Colonic mucosa (tissue), 4 donors: ENCODE measurements at regions of chr12 and their contacts with region 1.

Region 1: GRCh38 chr12:6323340-6323994 is 13.0 kb downstream of the PLEKHG6 start:
- DNase-seq: no peak
- H3K4me3 ChIP-seq: no peak overlapping the region
- H3K27ac ChIP-seq: peak overlapping the region; percentile 78
- H3K4me1 ChIP-seq: peaks cover 8% of the 10 kb centered on the region
- H3K27me3 ChIP-seq: no peaks in the 10 kb centered on the region
- CTCF ChIP-seq: peak; percentile 39

Region 2: GRCh38 chr12:5889381-5890047 is 434.0 kb before region 1 on chr12:
- intact Hi-C with region 1: no loop called
- DNase-seq: no peak
- H3K4me3 ChIP-seq: no peak overlapping the region
- H3K27ac ChIP-seq: no peak overlapping the region
- H3K4me1 ChIP-seq: no peaks in the 10 kb centered on the region
- H3K27me3 ChIP-seq: no peaks in the 10 kb centered on the region
- CTCF ChIP-seq: no peak

Region 3: DNA sequence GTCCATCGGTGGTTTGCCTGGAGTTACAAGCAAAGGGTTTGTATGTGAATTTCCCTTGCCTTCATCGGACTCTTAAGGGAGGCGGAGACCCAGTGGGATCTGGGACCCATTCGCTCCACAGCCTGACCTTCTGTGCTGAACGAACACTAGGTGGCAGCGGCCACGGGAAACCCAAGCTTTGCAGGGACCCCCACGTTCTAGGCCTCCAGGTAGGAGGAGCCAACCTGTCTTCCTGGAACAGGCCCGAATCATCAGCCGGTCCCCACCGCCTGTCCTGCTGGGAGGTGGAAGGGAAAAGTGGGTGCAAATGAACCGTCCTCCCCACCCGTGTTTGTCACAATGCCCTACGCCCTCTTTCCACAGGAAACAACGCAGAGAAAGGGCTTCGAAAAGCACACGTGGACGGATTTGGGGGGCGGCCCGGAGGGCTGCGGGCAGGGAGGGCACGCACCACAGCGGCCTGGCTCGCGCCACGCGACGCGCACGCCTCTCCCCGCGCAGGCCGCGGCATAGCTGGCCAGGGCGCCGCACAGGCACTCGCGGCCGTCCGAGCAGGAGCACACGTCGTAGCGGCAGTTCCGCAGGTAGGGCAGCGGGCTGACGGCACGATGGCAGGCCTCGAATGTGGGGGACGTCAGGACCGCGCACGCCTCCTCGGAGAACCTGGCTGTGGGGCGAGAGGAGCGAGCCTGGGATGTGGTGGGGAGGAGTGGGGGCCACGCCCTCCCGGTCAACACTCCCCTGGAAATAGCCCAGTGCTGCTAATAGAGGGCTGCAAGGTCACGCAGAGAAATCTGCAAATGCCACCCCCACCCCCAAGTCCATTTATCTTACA is 266.8 kb before region 1 on chr12:
- intact Hi-C with region 1: no loop called
- DNase-seq: no peak
- H3K4me3 ChIP-seq: peak overlapping the region; percentile 22
- H3K27ac ChIP-seq: no peak overlapping the region
- H3K4me1 ChIP-seq: no peaks in the 10 kb centered on the region
- H3K27me3 ChIP-seq: peaks cover 9% of the 10 kb centered on the region
- CTCF ChIP-seq: peak; percentile 18

Region 4: DNA sequence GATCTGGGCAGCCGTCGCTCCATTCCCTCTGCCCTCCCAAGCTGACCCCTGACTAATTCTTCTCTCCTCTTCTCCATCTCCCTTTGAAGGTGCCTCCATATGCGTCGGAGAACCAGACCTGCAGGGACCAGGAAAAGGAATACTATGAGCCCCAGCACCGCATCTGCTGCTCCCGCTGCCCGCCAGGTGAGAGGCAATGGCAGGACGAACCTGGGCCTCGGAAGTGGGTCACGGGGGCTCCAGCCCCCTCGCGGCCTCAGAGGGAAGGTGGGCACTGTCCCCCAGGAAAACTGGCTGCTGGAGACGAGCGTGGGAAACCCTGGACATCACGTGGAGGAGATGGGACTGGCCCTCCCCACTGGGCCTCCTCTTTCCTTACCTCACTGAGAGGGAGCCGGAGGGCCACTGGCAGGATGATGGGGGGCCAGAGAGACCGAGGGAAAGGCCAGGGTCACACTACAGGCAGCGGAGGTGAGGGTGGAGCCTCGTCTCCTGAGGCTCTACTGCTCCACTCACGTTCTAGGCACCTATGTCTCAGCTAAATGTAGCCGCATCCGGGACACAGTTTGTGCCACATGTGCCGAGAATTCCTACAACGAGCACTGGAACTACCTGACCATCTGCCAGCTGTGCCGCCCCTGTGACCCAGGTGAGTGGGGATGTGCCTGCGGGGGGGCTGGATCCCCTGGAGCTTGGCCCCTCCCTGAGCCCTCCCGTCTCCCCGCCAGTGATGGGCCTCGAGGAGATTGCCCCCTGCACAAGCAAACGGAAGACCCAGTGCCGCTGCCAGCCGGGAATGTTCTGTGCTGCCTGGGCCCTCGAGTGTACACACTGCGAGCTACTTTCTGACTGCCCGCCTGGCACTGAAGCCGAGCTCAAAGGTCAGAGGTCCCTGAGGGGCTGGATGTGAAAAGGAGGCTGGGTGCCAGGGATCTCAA is 61.3 kb after region 1 on chr12:
- intact Hi-C with region 1: loop called (anchors 5 kb)
- DNase-seq: peak; percentile 58
- H3K4me3 ChIP-seq: peak overlapping the region; percentile 64
- H3K27ac ChIP-seq: peak overlapping the region; percentile 96
- H3K4me1 ChIP-seq: peaks cover 6% of the 10 kb centered on the region
- H3K27me3 ChIP-seq: no peaks in the 10 kb centered on the region
- CTCF ChIP-seq: no peak

Region 5: DNA sequence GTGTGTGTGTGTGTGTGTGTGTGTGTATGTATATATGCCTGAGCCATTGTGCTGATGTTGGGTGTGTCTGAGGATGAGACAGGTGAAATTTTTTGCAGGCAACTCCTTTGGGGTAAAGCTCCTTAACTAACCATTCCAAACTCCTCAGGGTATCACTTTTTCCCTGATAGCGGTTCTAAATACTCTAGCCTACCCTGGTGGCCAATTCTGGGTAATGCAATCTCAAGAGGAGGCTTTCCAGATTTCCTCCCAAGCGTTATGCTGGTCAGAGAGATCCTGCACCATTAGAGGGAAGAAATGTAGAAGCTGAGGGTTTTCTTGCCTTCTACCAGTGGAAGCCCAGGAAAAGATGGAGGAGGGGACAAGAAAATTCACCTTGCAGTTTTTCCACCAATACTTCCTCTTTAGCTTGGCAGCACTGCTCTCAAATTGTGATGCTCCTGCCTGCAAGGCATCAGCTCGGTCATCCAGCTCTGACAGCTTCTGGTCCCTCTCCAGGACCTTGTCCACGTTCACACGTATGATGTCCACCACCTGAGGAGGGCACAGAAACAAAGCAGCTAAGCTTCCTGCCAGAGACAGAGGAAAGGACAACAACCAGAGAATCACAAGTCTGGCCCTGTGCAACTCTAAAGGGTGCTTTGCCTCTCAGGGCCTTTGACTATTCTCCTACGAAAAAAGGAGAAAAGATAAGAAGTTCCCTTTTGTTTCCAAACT is 142.2 kb after region 1 on chr12:
- intact Hi-C with region 1: loop called (anchors 5 kb)
- DNase-seq: peak; percentile 77
- H3K4me3 ChIP-seq: no peak overlapping the region
- H3K27ac ChIP-seq: no peak overlapping the region
- H3K4me1 ChIP-seq: peaks cover 14% of the 10 kb centered on the region
- H3K27me3 ChIP-seq: no peaks in the 10 kb centered on the region
- CTCF ChIP-seq: peak; percentile 78